ENCODE measurements at regions of chr2 and their contacts with region 1.

Region 1: GRCh38 chr2:25376750-25377621 is 35.3 kb upstream of the DNMT3A start:
- DNase-seq: peak; percentile 91
- ATAC-seq: peak; percentile 97
- H3K4me3 ChIP-seq: no peak overlapping the region
- H3K27ac ChIP-seq: peak overlapping the region; percentile 80
- H3K4me1 ChIP-seq: peaks cover 39% of the 10 kb centered on the region
- H3K27me3 ChIP-seq: no peaks in the 10 kb centered on the region
- CTCF ChIP-seq: peak; percentile 75 to 96 (median 92); a peak in 5 of 6 replicates
- EP300 ChIP-seq: peak; percentile 86 to 94
- POLR2A ChIP-seq: peak; percentile 58; the same call in 1 of the 2 replicates
- RAD21 ChIP-seq: peak; percentile 76

Region 2: DNA sequence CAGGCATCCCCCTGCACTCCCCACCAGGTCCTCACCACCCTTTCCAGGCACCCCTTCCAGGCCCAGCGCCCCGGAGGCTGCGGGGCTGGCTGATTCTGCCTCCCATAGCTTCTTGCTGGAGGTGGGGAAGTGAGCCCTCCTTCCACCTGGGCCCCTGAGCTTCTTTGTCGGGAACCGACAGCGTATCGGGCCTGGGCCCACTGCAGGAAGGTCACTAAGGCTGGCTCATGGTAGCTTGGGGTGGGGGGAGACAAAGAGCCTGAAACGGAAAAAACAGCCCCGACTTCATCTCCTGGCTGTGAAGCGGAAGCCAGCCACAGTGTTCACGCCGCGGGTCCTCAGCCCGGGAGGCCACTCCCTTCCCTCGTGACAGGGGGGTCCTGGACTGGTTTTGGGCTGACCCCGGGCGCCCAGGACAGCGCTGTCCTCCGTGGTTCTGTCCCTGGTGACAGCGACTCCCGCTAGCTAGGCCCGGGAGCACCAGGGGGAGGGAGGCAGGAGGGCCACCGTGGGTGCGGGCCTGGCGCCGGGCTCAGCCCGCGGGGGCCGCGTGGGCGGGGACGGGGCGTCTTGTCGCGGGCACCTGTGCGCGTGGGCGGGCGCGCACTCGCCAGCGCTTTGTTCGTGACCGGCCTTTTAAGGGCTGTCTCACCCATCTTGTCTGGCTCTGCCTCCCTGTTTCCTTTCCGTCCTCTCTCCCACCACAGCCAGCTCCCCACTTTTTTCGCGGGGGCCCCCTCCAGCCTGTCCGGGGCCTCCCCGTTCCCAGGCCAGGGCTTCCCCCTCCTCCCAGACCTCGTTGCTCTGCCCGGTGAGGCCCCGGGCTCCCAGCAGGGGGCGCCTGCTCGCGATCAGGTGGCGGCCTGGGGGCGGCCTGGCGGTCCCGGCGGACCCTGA is 100.2 kb before region 1 on chr2:
- CTCF ChIA-PET with region 1: interaction called, 26 read pairs
- POLR2A ChIA-PET with region 1: interaction called, 6 read pairs
- RAD21 ChIA-PET with region 1: interaction called, 5 read pairs
- SMC1A ChIA-PET with region 1: interaction called, 3 read pairs
- in situ Hi-C with region 1: no loop called
- intact Hi-C with region 1: no loop called
- DNase-seq: no peak
- ATAC-seq: peak; percentile 41
- H3K4me3 ChIP-seq: peak overlapping the region; percentile 45; the same call in 1 of the 2 replicates
- H3K27ac ChIP-seq: peak overlapping the region; percentile 77
- H3K4me1 ChIP-seq: peaks cover 86% of the 10 kb centered on the region
- H3K27me3 ChIP-seq: no peaks in the 10 kb centered on the region
- CTCF ChIP-seq: peak; percentile 75 to 89 (median 80)
- EP300 ChIP-seq: 0 out of 4 replicates have a peak, but pooled peaks of 1 of the 2 experiments have one; percentile 34
- POLR2A ChIP-seq: peak; percentile 54; the same call in 1 of the 2 replicates
- RAD21 ChIP-seq: peak; percentile 58; the same call in 1 of the 2 replicates

Region 3: GRCh38 chr2:25331686-25332365 is 45.2 kb before region 1 on chr2:
- CTCF ChIA-PET with region 1: no interaction called
- POLR2A ChIA-PET with region 1: no interaction called
- RAD21 ChIA-PET with region 1: no interaction called
- SMC1A ChIA-PET with region 1: no interaction called
- in situ Hi-C with region 1: no loop called
- intact Hi-C with region 1: no loop called
- DNase-seq: no peak
- ATAC-seq: peak; percentile 30; the same call in 2 of the 3 replicates
- H3K4me3 ChIP-seq: no peak overlapping the region
- H3K27ac ChIP-seq: no peak overlapping the region
- H3K4me1 ChIP-seq: peaks cover 18% of the 10 kb centered on the region
- H3K27me3 ChIP-seq: no peaks in the 10 kb centered on the region
- CTCF ChIP-seq: no peak
- EP300 ChIP-seq: no peak
- POLR2A ChIP-seq: no peak; the same call in 1 of the 2 replicates
- RAD21 ChIP-seq: no peak

Region 4: GRCh38 chr2:25388491-25388890 is 11.5 kb after region 1 on chr2:
- CTCF ChIA-PET with region 1: interaction called, 8 read pairs
- POLR2A ChIA-PET with region 1: interaction called, 7 read pairs
- RAD21 ChIA-PET with region 1: interaction called, 7 read pairs
- SMC1A ChIA-PET with region 1: interaction called, 11 read pairs
- in situ Hi-C with region 1: no loop called
- intact Hi-C with region 1: no loop called
- DNase-seq: no peak
- ATAC-seq: peak; percentile 86
- H3K4me3 ChIP-seq: no peak overlapping the region
- H3K27ac ChIP-seq: no peak overlapping the region
- H3K4me1 ChIP-seq: peaks cover 12% of the 10 kb centered on the region
- H3K27me3 ChIP-seq: no peaks in the 10 kb centered on the region
- CTCF ChIP-seq: no peak
- EP300 ChIP-seq: no peak
- POLR2A ChIP-seq: no peak
- RAD21 ChIP-seq: no peak

Region 5: GRCh38 chr2:25453199-25453905 is 76.4 kb after region 1 on chr2:
- CTCF ChIA-PET with region 1: interaction called, 3 read pairs
- POLR2A ChIA-PET with region 1: interaction called, 5 read pairs
- RAD21 ChIA-PET with region 1: interaction called, 10 read pairs
- SMC1A ChIA-PET with region 1: interaction called, 6 read pairs
- in situ Hi-C with region 1: no loop called
- intact Hi-C with region 1: no loop called
- DNase-seq: peak; percentile 69
- ATAC-seq: peak; percentile 96
- H3K4me3 ChIP-seq: no peak overlapping the region
- H3K27ac ChIP-seq: peak overlapping the region; percentile 94
- H3K4me1 ChIP-seq: peaks cover 18% of the 10 kb centered on the region
- H3K27me3 ChIP-seq: no peaks in the 10 kb centered on the region
- CTCF ChIP-seq: no peak
- EP300 ChIP-seq: no peak
- POLR2A ChIP-seq: no peak
- RAD21 ChIP-seq: no peak

Region 6: GRCh38 chr2:25558262-25558661 is 181.3 kb after region 1 on chr2:
- CTCF ChIA-PET with region 1: interaction called, 4 read pairs
- POLR2A ChIA-PET with region 1: interaction called, 3 read pairs
- RAD21 ChIA-PET with region 1: no interaction called
- SMC1A ChIA-PET with region 1: interaction called, 10 read pairs
- in situ Hi-C with region 1: no loop called
- intact Hi-C with region 1: no loop called
- DNase-seq: peak; percentile 75
- ATAC-seq: peak; percentile 93
- H3K4me3 ChIP-seq: 0 out of 2 replicates have a peak overlapping the region, but pooled peaks have one; percentile 20
- H3K27ac ChIP-seq: peak overlapping the region; percentile 81
- H3K4me1 ChIP-seq: peaks cover 37% of the 10 kb centered on the region
- H3K27me3 ChIP-seq: no peaks in the 10 kb centered on the region
- CTCF ChIP-seq: no peak
- EP300 ChIP-seq: peak; percentile 80 to 86
- POLR2A ChIP-seq: no peak
- RAD21 ChIP-seq: peak; percentile 42; the same call in 1 of the 2 replicates

Region 7: GRCh38 chr2:26251893-26252292 is 874.9 kb after region 1 on chr2:
- CTCF ChIA-PET with region 1: no interaction called
- POLR2A ChIA-PET with region 1: no interaction called
- RAD21 ChIA-PET with region 1: no interaction called
- SMC1A ChIA-PET with region 1: no interaction called
- in situ Hi-C with region 1: no loop called
- intact Hi-C with region 1: no loop called
- DNase-seq: no peak
- ATAC-seq: peak; percentile 68
- H3K4me3 ChIP-seq: no peak overlapping the region
- H3K27ac ChIP-seq: no peak overlapping the region
- H3K4me1 ChIP-seq: peaks cover 4% of the 10 kb centered on the region; the same call in 1 of the 2 replicates
- H3K27me3 ChIP-seq: no peaks in the 10 kb centered on the region
- CTCF ChIP-seq: no peak
- EP300 ChIP-seq: no peak
- POLR2A ChIP-seq: no peak
- RAD21 ChIP-seq: no peak

Measured in GM12878 (cell line).